ENCODE measurements at regions of chr17 and their contacts with region 1.

Region 1: GRCh38 chr17:38789185-38789584 is 10.2 kb downstream of the PIP4K2B start:
- DNase-seq: no peak
- ATAC-seq: no peak
- H3K4me3 ChIP-seq: no peak overlapping the region
- H3K27ac ChIP-seq: no peak overlapping the region
- H3K4me1 ChIP-seq: no peaks in the 10 kb centered on the region
- CTCF ChIP-seq: no peak
- EP300 ChIP-seq: no peak
- POLR2A ChIP-seq: no peak
- RAD21 ChIP-seq: no peak

Region 2: DNA sequence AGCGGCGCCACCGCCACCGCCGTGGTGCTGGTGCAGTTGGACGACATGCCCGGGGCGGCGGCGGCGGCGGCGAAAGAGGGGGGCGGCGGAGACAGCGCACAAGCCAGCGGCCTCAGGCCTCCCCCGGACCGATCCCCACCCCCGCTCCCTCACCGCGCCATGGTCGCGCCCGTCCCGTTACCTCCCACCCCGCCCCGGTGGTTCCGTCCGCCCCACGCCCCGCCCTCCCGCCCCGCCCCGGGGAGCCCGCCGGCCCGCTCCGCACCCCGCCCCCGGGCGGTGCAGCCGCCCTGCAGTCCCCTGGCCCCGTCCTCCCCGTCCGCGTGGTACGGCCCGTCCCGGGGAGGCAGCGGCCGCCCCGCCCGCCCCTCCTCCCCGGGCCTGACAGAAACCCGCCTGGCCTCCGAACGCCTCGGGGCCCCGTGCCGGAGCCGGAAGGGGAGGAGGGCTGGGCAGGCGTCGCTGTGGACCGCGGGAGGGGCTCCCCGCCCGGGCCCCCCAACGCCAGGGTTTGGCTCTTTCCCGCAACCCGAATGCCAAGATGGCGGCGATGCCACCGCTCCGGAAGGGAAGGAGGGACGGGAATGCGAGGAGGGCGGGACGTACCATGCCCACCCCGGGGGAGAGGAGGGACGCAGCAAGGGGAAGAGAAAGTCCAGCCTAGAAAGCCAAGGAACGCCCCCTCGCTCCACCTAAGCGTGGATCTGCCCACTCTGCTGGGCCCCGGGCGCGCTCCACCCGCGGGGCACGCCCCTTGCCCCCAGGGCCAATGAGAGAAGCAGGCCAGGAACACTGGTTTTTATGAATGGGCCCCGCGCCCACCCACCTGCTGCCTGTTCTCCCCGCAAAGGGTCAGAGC is 10.4 kb after region 1 on chr17 and contains the start of gene PIP4K2B:
- CTCF ChIA-PET with region 1: interaction called, 17 read pairs
- POLR2A ChIA-PET with region 1: no interaction called
- DNase-seq: peak; percentile 99
- ATAC-seq: peak; percentile 91 to 96
- H3K4me3 ChIP-seq: peak within 1 kb of the TSS; percentile 91
- H3K27ac ChIP-seq: peak within 1 kb of the TSS; percentile 92 to 98
- H3K4me1 ChIP-seq: peaks cover 27% of the 10 kb centered on the region
- CTCF ChIP-seq: no peak
- EP300 ChIP-seq: no peak
- POLR2A ChIP-seq: peak; percentile 54
- RAD21 ChIP-seq: no peak
- polyA plus RNA-seq, gene PIP4K2B: 40.3 and 42.5 TPM in 2 replicates